Posterior vena cava (tissue), 2 donors: ENCODE measurements at regions of chr1 and their contacts with region 1.

Region 1: DNA sequence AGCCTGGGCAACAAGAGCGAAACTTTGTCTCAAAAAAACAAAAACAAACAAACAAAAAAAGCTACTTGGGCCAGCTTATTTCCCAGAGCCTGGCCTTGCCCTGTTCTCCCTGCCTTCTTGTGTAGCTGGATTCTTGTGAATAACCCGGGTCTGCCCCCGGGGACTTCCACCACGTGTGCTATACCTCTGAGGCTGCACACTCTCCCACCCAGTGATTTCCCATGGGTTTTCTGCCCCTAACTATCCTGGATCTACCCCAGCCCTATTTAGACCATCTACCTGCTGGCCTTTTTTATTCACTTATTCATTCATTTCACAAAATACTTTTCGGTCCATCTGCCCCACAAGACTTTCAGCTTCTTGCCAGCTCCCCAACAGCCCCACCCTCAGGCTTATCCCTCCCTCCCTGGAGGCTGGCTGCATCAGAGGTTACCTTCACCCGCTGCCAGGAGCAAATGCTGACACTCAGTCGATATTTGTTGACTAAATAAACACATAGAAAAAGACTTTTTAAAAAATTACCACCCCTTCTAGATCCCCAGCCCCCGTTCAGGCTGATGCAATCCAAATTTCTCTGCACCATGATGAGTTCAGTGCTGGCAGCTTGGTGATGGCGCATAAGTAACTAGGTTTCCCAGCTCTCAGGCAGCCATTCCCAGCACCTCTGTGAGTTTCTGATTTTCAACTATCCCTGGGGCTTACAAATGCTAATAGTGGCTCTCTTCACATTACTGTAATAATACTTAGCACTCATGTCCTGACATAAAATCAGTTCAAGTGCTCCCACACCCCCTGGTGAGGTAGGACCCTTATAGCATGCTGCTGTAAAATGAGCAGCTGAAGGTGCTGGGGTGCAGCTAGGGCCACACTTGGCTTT is 30.7 kb upstream of the TARBP1 start:
- DNase-seq: no peak

Region 2: GRCh38 chr1:234589854-234590620 is 80.3 kb after region 1 on chr1:
- intact Hi-C with region 1: loop called (anchors 5 to 10 kb)
- DNase-seq: no peak